Activated CD8-positive, alpha-beta T cell treated with anti-CD3 and anti-CD28 coated beads for 36 hours (primary cell): ENCODE measurements at regions of chr7 and their contacts with region 1.

Region 1: DNA sequence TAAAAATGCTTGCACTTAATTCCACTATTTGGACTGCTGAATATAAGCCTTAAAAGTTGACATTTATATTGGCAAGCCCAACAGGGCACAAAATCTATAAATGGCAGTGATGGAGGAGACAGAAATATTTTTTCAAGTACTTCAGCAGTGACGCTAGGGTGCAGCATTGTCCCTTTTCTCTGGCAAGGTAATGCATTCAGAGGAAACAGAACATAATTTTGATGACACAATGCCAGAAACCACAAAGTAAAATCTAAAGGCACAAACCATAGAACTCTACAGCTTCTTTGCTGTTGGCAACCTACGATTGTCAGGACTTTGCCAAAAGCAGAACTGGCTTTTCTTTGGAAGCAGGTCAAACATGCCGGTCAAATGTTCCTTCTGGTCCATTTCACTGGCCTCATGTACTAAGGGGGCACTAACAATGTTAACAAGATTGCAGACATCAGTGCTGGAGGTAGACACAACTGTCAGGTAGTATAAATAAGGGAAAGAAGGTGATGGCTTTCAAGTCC is 30.9 kb upstream of the FAM133B start:
- DNase-seq: peak; percentile 82
- ATAC-seq: peak; percentile 76
- H3K4me3 Mint-ChIP-seq: peak overlapping the region; percentile 19
- H3K27ac Mint-ChIP-seq: peak overlapping the region; percentile 82
- H3K4me1 Mint-ChIP-seq: peaks cover 45% of the 10 kb centered on the region
- H3K27me3 Mint-ChIP-seq: no peaks in the 10 kb centered on the region
- CTCF ChIP-seq: peak; percentile 75

Region 2: GRCh38 chr7:92517631-92518030 is 103.5 kb before region 1 on chr7:
- CTCF ChIA-PET with region 1: no interaction called
- POLR2A ChIA-PET with region 1: no interaction called
- intact Hi-C with region 1: no loop called
- DNase-seq: no peak
- ATAC-seq: no peak
- H3K4me3 Mint-ChIP-seq: no peak overlapping the region
- H3K27ac Mint-ChIP-seq: peak overlapping the region; percentile 72
- H3K4me1 Mint-ChIP-seq: peaks cover 8% of the 10 kb centered on the region
- H3K27me3 Mint-ChIP-seq: no peaks in the 10 kb centered on the region
- CTCF ChIP-seq: no peak

Region 3: DNA sequence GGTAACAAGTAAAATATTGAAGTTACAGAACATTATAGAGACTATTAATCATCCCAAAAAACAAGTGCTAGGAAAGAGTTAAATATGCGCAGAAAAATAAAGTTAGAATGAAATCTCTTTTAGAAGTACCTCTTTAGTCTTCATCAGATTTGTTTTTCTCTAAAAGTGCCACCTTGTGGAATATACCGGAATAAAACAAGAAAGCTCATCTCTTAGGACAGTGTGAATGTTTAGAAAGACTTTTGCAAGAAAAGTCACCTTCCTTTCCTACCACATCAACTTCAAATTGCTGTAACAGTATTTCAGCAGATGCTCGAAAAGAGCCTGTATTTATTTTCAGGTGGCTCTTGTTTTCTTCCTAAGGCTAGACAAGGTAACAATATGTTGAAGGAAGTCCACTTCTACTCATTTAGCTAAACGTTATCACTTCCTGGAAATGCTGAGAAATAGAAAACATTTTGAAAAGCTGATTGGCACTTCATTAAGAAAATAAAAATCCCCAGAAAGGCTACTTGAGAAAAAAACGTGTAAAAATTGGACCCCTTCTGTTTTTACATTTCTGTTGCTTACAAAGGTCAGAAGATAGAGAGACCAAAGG is 11.1 kb before region 1 on chr7:
- CTCF ChIA-PET with region 1: interaction called, 13 read pairs
- POLR2A ChIA-PET with region 1: interaction called, 4 read pairs
- intact Hi-C with region 1: no loop called
- DNase-seq: no peak
- ATAC-seq: peak; percentile 65
- H3K4me3 Mint-ChIP-seq: no peak overlapping the region
- H3K27ac Mint-ChIP-seq: peak overlapping the region; percentile 56
- H3K4me1 Mint-ChIP-seq: peaks cover 23% of the 10 kb centered on the region
- H3K27me3 Mint-ChIP-seq: no peaks in the 10 kb centered on the region
- CTCF ChIP-seq: peak; percentile 43

Region 4: DNA sequence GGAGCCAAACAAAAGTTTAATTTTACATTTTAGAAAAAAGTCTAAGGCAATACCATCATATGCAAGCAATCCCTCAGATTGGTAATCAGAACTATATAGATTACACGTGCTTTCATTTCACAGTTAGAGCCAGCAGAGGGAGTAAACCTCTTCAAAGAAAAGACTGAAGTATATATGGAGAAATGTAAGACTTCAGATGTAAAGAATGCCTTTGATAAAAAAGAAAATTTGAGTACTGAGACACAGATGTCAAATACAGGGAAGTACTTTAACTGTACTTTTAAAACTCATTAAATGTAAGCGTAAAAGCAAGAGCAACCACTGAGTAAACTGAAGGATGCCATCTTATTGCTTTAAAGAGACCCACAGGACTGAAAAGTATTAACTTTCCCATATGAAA is 70.5 kb after region 1 on chr7:
- CTCF ChIA-PET with region 1: interaction called, 18 read pairs
- POLR2A ChIA-PET with region 1: no interaction called
- intact Hi-C with region 1: loop called (anchors 2 kb)
- DNase-seq: peak; percentile 40
- ATAC-seq: peak; percentile 92
- H3K4me3 Mint-ChIP-seq: no peak overlapping the region
- H3K27ac Mint-ChIP-seq: peak overlapping the region; percentile 59
- H3K4me1 Mint-ChIP-seq: peaks cover 56% of the 10 kb centered on the region
- H3K27me3 Mint-ChIP-seq: no peaks in the 10 kb centered on the region
- CTCF ChIP-seq: peak; percentile 66

Region 5: GRCh38 chr7:92809397-92810241 is 188.5 kb after region 1 on chr7:
- CTCF ChIA-PET with region 1: interaction called, 13 read pairs
- POLR2A ChIA-PET with region 1: no interaction called
- intact Hi-C with region 1: no loop called
- DNase-seq: peak; percentile 81
- ATAC-seq: peak; percentile 64
- H3K4me3 Mint-ChIP-seq: peak overlapping the region; percentile 38
- H3K27ac Mint-ChIP-seq: peak overlapping the region; percentile 92
- H3K4me1 Mint-ChIP-seq: peaks cover 69% of the 10 kb centered on the region
- H3K27me3 Mint-ChIP-seq: no peaks in the 10 kb centered on the region
- CTCF ChIP-seq: no peak

Region 6: DNA sequence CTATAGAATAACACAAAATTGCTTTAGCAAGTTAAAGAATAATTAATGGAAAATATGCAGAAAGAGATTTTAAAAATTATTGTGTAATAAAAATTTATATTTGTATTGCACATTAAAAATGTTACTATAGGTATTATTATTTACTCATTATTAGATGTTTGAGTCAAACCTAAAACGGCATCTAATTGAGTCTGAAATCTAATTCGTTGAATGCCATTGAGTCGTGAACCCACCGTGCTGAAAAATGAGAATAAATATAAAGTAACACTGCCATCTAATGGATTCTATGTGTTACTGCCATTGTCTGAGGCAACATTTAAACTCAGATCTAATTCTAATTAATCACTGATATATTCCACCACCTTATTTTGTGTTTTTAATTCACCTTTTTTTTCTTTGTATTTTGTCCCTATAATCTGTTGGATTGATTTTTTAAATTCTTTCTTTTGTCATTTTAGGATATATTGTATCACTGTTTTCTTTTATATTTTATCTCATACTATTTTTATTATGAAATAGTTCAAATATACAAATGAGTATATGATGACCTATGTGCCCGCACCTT is 434.5 kb after region 1 on chr7:
- CTCF ChIA-PET with region 1: no interaction called
- POLR2A ChIA-PET with region 1: no interaction called
- intact Hi-C with region 1: loop called (anchors 5 kb)
- DNase-seq: no peak
- ATAC-seq: peak; percentile 85
- H3K4me3 Mint-ChIP-seq: no peak overlapping the region
- H3K27ac Mint-ChIP-seq: no peak overlapping the region
- H3K4me1 Mint-ChIP-seq: peaks cover 5% of the 10 kb centered on the region
- H3K27me3 Mint-ChIP-seq: peaks cover 3% of the 10 kb centered on the region
- CTCF ChIP-seq: peak; percentile 81